IMR-90 (cell line): ENCODE measurements at regions of chr9 and their contacts with region 1.

Region 1: GRCh38 chr9:82651474-82651873 is 411.5 kb downstream of the RASEF start:
- DNase-seq: no peak
- ATAC-seq: no peak
- H3K4me3 ChIP-seq: no peak overlapping the region
- H3K27ac ChIP-seq: no peak overlapping the region
- H3K4me1 ChIP-seq: no peaks in the 10 kb centered on the region
- H3K27me3 ChIP-seq: no peaks in the 10 kb centered on the region
- CTCF ChIP-seq: no peak
- POLR2A ChIP-seq: no peak
- RAD21 ChIP-seq: no peak

Region 2: DNA sequence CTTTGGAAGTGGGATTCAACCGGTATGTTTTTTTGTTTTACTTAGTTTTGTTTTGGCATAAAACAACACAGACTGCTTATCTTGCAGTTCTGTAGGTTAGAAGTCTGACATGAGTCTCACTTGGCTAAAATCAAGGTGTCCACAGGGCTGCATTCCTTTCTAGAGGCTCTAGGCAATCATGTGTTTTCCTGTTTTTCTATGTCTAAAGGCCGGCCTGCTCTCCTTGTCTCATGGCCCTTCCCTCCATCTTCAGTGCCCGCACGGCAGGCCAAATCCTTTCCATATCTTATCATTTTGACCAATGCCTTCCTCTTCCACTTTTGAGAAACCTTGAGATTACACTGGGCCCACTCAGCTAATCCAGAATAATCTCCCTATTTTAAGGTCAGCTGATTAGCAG is 210.5 kb after region 1 on chr9:
- CTCF ChIA-PET with region 1: no interaction called
- POLR2A ChIA-PET with region 1: no interaction called
- dilution Hi-C with region 1: no loop called
- in situ Hi-C with region 1: no loop called
- intact Hi-C with region 1: loop called (anchors 10 kb)
- DNase-seq: no peak
- ATAC-seq: no peak
- H3K4me3 ChIP-seq: no peak overlapping the region
- H3K27ac ChIP-seq: no peak overlapping the region
- H3K4me1 ChIP-seq: no peaks in the 10 kb centered on the region
- H3K27me3 ChIP-seq: no peaks in the 10 kb centered on the region
- CTCF ChIP-seq: no peak
- POLR2A ChIP-seq: no peak
- RAD21 ChIP-seq: no peak

Region 3: GRCh38 chr9:82934952-82935351 is 283.5 kb after region 1 on chr9:
- CTCF ChIA-PET with region 1: no interaction called
- POLR2A ChIA-PET with region 1: no interaction called
- dilution Hi-C with region 1: no loop called
- in situ Hi-C with region 1: no loop called
- intact Hi-C with region 1: no loop called
- DNase-seq: peak; percentile 49
- ATAC-seq: peak; percentile 46
- H3K4me3 ChIP-seq: no peak overlapping the region
- H3K27ac ChIP-seq: no peak overlapping the region
- H3K4me1 ChIP-seq: no peaks in the 10 kb centered on the region
- H3K27me3 ChIP-seq: no peaks in the 10 kb centered on the region
- CTCF ChIP-seq: no peak
- POLR2A ChIP-seq: no peak
- RAD21 ChIP-seq: no peak